B cell (primary cell): ENCODE measurements at regions of chr14 and their contacts with region 1.

Region 1: GRCh38 chr14:38973028-38973700 is 129.9 kb downstream of the SEC23A start:
- DNase-seq: no peak
- ATAC-seq: no peak
- H3K4me3 ChIP-seq: no peak overlapping the region
- H3K4me3 Mint-ChIP-seq: no peak overlapping the region
- H3K27ac ChIP-seq: no peak overlapping the region
- H3K27ac Mint-ChIP-seq: no peak overlapping the region
- H3K4me1 ChIP-seq: no peaks in the 10 kb centered on the region
- H3K4me1 Mint-ChIP-seq: no peaks in the 10 kb centered on the region
- H3K27me3 ChIP-seq: no peaks in the 10 kb centered on the region
- H3K27me3 Mint-ChIP-seq: peaks cover 3% of the 10 kb centered on the region
- CTCF ChIP-seq: no peak

Region 2: GRCh38 chr14:39182770-39183684 is 209.9 kb after region 1 on chr14:
- CTCF ChIA-PET with region 1: no interaction called
- POLR2A ChIA-PET with region 1: interaction called, 13 read pairs
- intact Hi-C with region 1: no loop called
- DNase-seq: no peak
- ATAC-seq: no peak
- H3K4me3 ChIP-seq: no peak overlapping the region
- H3K4me3 Mint-ChIP-seq: no peak overlapping the region
- H3K27ac ChIP-seq: no peak overlapping the region
- H3K27ac Mint-ChIP-seq: no peak overlapping the region
- H3K4me1 ChIP-seq: no peaks in the 10 kb centered on the region
- H3K4me1 Mint-ChIP-seq: peaks cover 3% of the 10 kb centered on the region
- H3K27me3 ChIP-seq: no peaks in the 10 kb centered on the region
- H3K27me3 Mint-ChIP-seq: no peaks in the 10 kb centered on the region
- CTCF ChIP-seq: no peak